HepG2 (cell line): ENCODE measurements at regions of chr9 and their contacts with region 1.

Region 1: GRCh38 chr9:19925817-19926503 is 137.1 kb upstream of the SLC24A2 start:
- DNase-seq: peak; percentile 55
- ATAC-seq: peak; percentile 98
- H3K4me3 ChIP-seq: no peak overlapping the region
- H3K27ac ChIP-seq: no peak overlapping the region
- H3K4me1 ChIP-seq: no peaks in the 10 kb centered on the region
- H3K27me3 ChIP-seq: peaks cover 1 to 15% of the 10 kb centered on the region in 2 experiments; a peak in 3 of 5 replicates
- CTCF ChIP-seq: peak; percentile 96
- EP300 ChIP-seq: no peak
- POLR2A ChIP-seq: no peak
- RAD21 ChIP-seq: peak; percentile 86

Region 2: GRCh38 chr9:19481971-19482404 is 444.0 kb before region 1 on chr9:
- CTCF ChIA-PET with region 1: no interaction called
- POLR2A ChIA-PET with region 1: no interaction called
- in situ Hi-C with region 1: loop called (anchors 10 kb)
- intact Hi-C with region 1: no loop called
- DNase-seq: no peak
- ATAC-seq: 0 out of 3 replicates have a peak, but pooled peaks have one; percentile 37
- H3K4me3 ChIP-seq: no peak overlapping the region
- H3K27ac ChIP-seq: no peak overlapping the region
- H3K4me1 ChIP-seq: no peaks in the 10 kb centered on the region
- H3K27me3 ChIP-seq: no peaks in the 10 kb centered on the region
- CTCF ChIP-seq: no peak
- EP300 ChIP-seq: no peak
- POLR2A ChIP-seq: no peak
- RAD21 ChIP-seq: no peak

Region 3: GRCh38 chr9:19799784-19800183 is 126.2 kb before region 1 on chr9:
- CTCF ChIA-PET with region 1: no interaction called
- POLR2A ChIA-PET with region 1: no interaction called
- in situ Hi-C with region 1: no loop called
- intact Hi-C with region 1: no loop called
- DNase-seq: no peak
- ATAC-seq: no peak
- H3K4me3 ChIP-seq: no peak overlapping the region
- H3K27ac ChIP-seq: no peak overlapping the region
- H3K4me1 ChIP-seq: no peaks in the 10 kb centered on the region
- H3K27me3 ChIP-seq: no peaks in the 10 kb centered on the region
- CTCF ChIP-seq: no peak
- EP300 ChIP-seq: no peak
- POLR2A ChIP-seq: no peak
- RAD21 ChIP-seq: no peak

Region 4: DNA sequence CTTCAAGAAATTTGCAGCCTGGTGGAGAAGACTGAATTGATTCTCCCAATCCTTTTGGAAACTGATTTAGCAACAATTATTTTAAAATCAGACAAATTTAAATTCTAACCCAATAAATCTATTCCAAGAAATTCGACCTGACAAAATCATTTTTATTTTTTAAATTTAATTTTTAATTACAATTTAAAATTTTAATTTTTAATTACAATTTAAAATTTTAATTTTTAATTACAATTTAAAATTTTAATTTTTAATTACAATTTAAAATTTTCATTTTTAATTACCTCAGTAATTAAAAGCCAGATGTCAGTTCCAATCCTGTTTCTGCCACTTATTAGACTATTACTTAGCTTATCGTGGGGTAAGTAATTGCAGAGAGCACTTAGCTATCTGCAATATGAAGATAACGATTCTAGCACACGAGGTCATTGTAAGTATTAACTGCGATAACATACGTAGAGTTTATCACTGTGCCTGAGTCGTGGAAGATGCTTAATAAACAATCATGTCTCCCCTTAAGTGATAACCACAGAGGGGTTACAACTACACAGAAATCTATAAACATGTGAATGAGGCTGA is 209.2 kb after region 1 on chr9:
- CTCF ChIA-PET with region 1: no interaction called
- POLR2A ChIA-PET with region 1: no interaction called
- in situ Hi-C with region 1: no loop called
- intact Hi-C with region 1: no loop called
- DNase-seq: no peak
- ATAC-seq: no peak
- H3K4me3 ChIP-seq: no peak overlapping the region
- H3K27ac ChIP-seq: no peak overlapping the region
- H3K4me1 ChIP-seq: no peaks in the 10 kb centered on the region
- H3K27me3 ChIP-seq: no peaks in the 10 kb centered on the region; a peak in 1 of 5 replicates
- CTCF ChIP-seq: no peak
- EP300 ChIP-seq: no peak
- POLR2A ChIP-seq: no peak
- RAD21 ChIP-seq: no peak

Region 5: GRCh38 chr9:20262611-20263010 is 336.7 kb after region 1 on chr9:
- CTCF ChIA-PET with region 1: no interaction called
- POLR2A ChIA-PET with region 1: no interaction called
- in situ Hi-C with region 1: no loop called
- intact Hi-C with region 1: no loop called
- DNase-seq: no peak
- ATAC-seq: no peak
- H3K4me3 ChIP-seq: no peak overlapping the region
- H3K27ac ChIP-seq: no peak overlapping the region
- H3K4me1 ChIP-seq: no peaks in the 10 kb centered on the region
- H3K27me3 ChIP-seq: 0 out of 5 replicates have a peak, but pooled peaks cover 0 to 1% of the 10 kb centered on the region in 2 experiments
- CTCF ChIP-seq: no peak
- EP300 ChIP-seq: no peak
- POLR2A ChIP-seq: no peak
- RAD21 ChIP-seq: no peak

Region 6: GRCh38 chr9:20331095-20331685 is 405.2 kb after region 1 on chr9:
- CTCF ChIA-PET with region 1: no interaction called
- POLR2A ChIA-PET with region 1: no interaction called
- in situ Hi-C with region 1: no loop called
- intact Hi-C with region 1: no loop called
- DNase-seq: no peak
- ATAC-seq: no peak
- H3K4me3 ChIP-seq: no peak overlapping the region
- H3K27ac ChIP-seq: no peak overlapping the region
- H3K4me1 ChIP-seq: no peaks in the 10 kb centered on the region
- H3K27me3 ChIP-seq: 0 out of 5 replicates have a peak, but pooled peaks cover 0 to under 1% of the 10 kb centered on the region in 2 experiments
- CTCF ChIP-seq: no peak
- EP300 ChIP-seq: no peak
- POLR2A ChIP-seq: no peak
- RAD21 ChIP-seq: no peak

Region 7: GRCh38 chr9:20356403-20357035 is 430.6 kb after region 1 on chr9:
- CTCF ChIA-PET with region 1: no interaction called
- POLR2A ChIA-PET with region 1: no interaction called
- in situ Hi-C with region 1: no loop called
- intact Hi-C with region 1: loop called (anchors 1 kb)
- DNase-seq: peak; percentile 64
- ATAC-seq: peak; percentile 96
- H3K4me3 ChIP-seq: no peak overlapping the region; a peak in 2 of 6 replicates
- H3K27ac ChIP-seq: peak overlapping the region; percentile 6
- H3K4me1 ChIP-seq: peaks cover 18% of the 10 kb centered on the region
- H3K27me3 ChIP-seq: no peaks in the 10 kb centered on the region
- CTCF ChIP-seq: peak; percentile 85
- EP300 ChIP-seq: no peak
- POLR2A ChIP-seq: no peak
- RAD21 ChIP-seq: peak; percentile 69

Region 8: GRCh38 chr9:20898885-20899554 is 973.1 kb after region 1 on chr9:
- CTCF ChIA-PET with region 1: no interaction called
- POLR2A ChIA-PET with region 1: no interaction called
- in situ Hi-C with region 1: no loop called
- intact Hi-C with region 1: loop called (anchors 5 kb)
- DNase-seq: no peak
- ATAC-seq: no peak
- H3K4me3 ChIP-seq: no peak overlapping the region
- H3K27ac ChIP-seq: no peak overlapping the region
- H3K4me1 ChIP-seq: peaks cover 8% of the 10 kb centered on the region
- H3K27me3 ChIP-seq: no peaks in the 10 kb centered on the region
- CTCF ChIP-seq: no peak
- EP300 ChIP-seq: no peak
- POLR2A ChIP-seq: no peak
- RAD21 ChIP-seq: no peak

Region 9: DNA sequence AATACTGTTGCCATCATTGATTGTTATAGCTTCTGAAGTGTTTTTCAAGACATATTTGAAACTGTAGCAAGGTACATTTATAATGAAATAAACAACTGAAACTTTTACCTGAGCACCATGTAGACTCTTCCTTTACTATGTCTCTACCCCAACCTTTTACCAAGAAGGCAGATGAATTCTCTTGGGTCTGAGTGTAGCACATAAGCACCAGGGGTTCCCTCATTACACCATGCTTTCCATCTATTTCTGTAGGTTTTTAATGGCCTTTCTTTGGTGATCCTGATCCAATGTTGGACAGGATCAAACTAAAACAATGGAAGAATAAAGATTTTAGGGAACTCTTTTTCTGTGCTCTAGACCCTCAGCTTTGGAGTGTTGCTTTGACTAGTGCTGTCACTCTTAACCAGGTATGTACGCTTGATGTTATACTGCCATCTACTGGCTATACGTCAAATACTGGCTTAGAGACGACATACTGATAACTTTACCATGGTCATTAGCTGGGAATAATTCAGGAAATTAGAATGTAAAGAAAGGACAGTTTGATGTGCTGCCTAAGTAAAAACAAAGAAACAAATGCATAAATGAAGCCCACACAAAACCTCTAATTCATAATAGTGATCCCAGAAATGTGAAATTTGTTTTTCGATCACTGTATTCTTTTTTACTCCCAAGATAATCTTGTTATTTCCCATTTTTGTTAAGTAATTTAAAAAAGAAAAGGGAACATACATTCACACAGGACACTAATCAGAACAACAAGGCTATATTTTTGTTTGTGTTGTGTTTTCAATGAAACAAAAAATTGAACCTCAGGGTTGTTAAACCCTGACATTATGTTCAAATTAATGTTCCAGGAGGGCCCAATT is 1185.0 kb after region 1 on chr9:
- CTCF ChIA-PET with region 1: interaction called, 20 read pairs
- POLR2A ChIA-PET with region 1: no interaction called
- in situ Hi-C with region 1: loop called (anchors 5 kb)
- intact Hi-C with region 1: loop called (anchors 1 kb)
- DNase-seq: peak; percentile 61
- ATAC-seq: peak; percentile 98
- H3K4me3 ChIP-seq: no peak overlapping the region
- H3K27ac ChIP-seq: no peak overlapping the region
- H3K4me1 ChIP-seq: no peaks in the 10 kb centered on the region
- H3K27me3 ChIP-seq: no peaks in the 10 kb centered on the region
- CTCF ChIP-seq: peak; percentile 85
- EP300 ChIP-seq: no peak
- POLR2A ChIP-seq: no peak
- RAD21 ChIP-seq: no peak